Dendritic cell treated with granulocyte-macrophage colony-stimulating factor and Interleukin-4, amounts not matched to agents 40 ng/mL and 50 ng/mL, for 4 days (primary cell): ENCODE measurements at regions of chr19 and their contacts with region 1.

Region 1: DNA sequence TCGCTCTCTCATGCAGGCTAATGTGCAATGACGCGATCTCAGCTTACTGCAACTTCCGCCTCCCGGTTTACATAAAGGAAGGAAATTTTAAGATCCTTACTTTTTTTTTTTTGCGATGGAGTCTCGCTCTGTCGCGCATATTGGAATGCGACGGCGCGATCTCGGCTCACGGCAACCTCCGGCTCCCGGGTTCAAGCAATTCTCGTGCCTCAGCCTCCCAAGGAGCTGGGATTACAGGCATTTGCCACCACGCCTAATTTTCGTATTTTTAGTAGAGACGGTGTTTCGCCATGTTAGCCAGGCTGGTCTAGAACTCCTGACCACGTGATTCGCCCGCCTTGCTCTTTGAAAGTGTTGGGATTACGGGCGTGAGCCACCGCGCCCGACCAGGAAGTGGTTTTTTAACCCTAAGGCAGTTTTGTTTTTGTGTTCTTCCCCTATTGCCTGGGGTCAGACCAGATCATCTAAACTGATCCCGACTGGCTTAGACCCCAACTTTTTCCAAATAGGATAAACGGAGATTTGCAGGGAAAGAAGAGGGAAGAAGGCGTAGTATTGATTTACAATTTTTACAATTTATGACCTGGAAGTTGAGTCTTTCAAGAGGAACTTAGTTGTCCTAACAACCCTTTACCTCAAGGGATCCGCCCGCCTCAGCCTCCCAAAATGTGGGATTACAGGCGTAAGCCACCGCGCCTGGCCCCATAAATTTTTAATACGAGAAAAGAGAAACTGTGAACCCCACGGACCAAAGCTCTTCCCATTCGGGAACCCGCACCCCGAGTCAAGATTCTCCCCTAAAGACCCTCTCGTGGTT is 142.0 kb downstream of the ZNF737 start:
- H3K4me3 Mint-ChIP-seq: peak overlapping the region; percentile 98
- H3K27ac Mint-ChIP-seq: peak overlapping the region; percentile 96
- H3K4me1 Mint-ChIP-seq: peaks cover 6% of the 10 kb centered on the region
- H3K27me3 Mint-ChIP-seq: no peaks in the 10 kb centered on the region

Region 2: DNA sequence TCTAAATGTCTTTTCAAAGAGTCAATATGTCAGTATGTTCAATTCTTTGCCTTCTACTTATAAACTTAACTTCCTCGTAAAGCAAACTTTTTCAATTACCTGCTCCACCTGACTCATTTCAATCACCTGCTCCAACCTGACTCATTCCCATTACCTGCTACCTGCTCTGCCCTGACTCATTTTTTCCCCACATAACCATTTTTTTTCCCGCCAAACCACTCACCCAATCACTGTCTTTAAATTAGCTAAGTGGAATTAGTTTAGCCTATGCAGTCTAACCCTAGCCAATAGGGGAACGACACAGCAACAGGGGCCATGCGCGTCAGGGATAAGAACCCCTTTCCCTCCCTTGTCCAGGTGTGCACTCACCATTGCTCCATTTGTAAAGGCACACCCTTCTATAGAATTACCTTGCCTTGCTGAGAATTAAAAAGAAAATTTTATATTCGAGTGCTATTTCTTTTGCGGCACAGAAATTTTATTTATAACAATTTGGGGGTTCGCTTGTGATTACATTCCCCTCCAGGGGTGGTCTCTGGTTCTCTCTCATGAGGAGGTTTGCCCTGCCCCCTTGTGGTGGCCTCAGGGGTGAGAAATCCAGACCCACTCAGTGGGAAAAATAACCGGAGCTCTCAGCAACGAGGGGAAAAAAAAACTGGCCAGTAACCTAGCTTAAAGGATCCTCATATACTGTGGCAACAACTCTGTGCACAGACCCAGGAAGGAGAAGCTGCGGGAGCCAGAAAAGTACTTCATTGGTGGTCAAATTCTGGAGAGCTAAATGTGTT is 63.5 kb before region 1 on chr19:
- intact Hi-C with region 1: no loop called
- H3K4me3 Mint-ChIP-seq: no peak overlapping the region
- H3K27ac Mint-ChIP-seq: no peak overlapping the region
- H3K4me1 Mint-ChIP-seq: no peaks in the 10 kb centered on the region
- H3K27me3 Mint-ChIP-seq: no peaks in the 10 kb centered on the region

Region 3: DNA sequence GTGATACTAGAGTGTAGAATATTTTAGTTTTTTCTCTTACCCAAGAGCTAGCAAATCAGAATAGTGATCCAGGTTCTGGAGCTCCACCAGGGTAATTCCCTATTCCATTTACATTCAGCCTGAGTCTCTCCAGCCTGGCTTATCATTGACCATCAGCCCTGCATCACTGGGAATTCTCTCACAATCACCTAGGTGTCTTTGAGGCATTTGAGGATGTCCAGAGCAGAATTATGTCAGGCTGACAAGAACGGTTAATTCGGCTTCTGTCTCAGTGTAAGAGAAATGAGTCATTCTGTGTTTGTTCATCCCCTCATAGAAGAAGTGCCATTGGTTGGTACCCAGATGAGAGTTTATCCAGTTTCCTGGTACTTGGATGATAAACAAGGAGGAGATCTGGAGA is 38.5 kb before region 1 on chr19:
- intact Hi-C with region 1: no loop called
- H3K4me3 Mint-ChIP-seq: no peak overlapping the region
- H3K27ac Mint-ChIP-seq: no peak overlapping the region
- H3K4me1 Mint-ChIP-seq: no peaks in the 10 kb centered on the region
- H3K27me3 Mint-ChIP-seq: no peaks in the 10 kb centered on the region

Region 4: DNA sequence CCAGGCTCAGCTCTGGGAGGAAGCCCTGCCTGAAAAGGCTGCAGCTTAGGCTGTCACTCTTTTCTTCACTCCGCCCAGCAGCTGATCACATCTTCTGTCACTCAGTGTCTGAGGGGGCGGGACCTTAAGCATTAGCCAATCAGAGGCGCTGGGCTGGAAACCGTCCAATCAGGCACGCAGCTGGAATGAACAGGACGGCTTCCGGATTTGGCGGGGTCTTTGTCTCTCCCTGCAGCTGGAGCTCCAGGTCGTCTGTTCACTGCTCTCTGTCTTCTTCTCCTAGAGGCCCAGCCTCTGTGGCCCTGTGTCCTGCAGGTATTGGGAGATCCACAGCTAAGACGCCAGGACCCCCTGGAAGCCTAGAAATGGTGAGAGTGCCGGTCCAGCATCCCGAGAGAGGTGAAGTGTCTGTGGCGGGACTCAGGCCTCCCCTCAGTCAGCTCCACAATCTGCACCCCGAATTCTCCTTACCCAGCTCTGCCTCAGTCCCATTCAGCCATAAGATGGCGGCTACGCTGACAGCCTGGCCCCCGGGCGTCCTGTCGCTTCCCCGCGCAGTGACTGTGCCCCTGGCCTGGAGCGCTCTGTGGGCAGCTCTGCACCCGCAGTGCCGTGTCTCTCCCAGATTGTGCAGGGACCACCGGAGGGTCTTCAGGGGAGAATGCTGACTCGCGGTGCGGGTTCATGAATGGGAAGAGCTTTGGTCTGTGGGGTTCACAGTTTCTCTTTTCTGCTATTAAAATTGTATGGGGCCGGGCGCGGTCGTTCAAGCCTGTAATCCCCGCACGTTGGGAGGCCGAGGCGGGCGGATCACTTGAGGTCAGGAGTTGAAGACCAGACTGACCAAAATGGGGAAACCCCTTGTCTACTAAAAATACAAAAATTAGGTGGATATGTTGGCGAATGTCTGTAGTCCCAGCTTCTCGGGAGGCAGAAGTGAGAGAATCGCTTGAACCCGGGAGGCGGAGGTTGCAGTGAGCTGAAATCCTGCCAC is 352.8 kb after region 1 on chr19 and contains the start of gene ZNF66:
- intact Hi-C with region 1: loop called (anchors 5 kb)
- H3K4me3 Mint-ChIP-seq: peak within 1 kb of the TSS; percentile 97
- H3K27ac Mint-ChIP-seq: peak within 1 kb of the TSS; percentile 94
- H3K4me1 Mint-ChIP-seq: peaks cover 11% of the 10 kb centered on the region
- H3K27me3 Mint-ChIP-seq: no peaks in the 10 kb centered on the region